GM12878 (cell line): ENCODE measurements at regions of chr9 and their contacts with region 1.

Region 1: DNA sequence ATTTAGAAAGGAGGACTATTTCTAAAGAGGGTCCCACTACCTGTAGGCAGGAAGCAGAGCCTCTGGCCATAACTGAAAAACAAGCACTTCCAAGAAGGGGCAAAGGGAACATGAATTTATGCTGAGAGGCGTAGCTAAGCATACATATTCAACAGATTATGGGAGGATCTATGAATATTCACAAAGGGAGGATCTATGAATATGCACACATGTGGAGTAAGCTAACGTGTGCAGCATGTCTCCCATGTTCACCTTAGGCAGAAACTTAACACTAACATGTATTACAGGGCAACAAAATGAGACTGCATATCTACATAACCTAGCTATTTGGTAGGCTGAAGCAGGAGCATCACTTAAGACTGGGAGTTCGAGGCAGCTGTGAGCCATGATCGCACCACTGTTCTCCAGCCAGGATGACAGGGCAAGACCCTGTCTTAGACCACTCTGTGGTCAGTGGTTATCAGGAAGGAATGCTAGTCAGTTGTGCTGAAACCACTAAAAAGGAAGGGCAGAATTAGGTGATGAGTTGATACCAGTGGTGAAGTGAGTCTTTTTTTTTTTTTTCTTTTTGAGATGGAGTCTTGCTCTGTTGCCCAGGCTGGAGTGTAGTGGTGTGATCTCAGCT is 20.8 kb downstream of the FXN start:
- DNase-seq: no peak
- ATAC-seq: no peak
- H3K4me3 ChIP-seq: no peak overlapping the region
- H3K27ac ChIP-seq: no peak overlapping the region
- H3K4me1 ChIP-seq: no peaks in the 10 kb centered on the region
- H3K27me3 ChIP-seq: no peaks in the 10 kb centered on the region
- CTCF ChIP-seq: no peak
- EP300 ChIP-seq: no peak
- POLR2A ChIP-seq: no peak
- RAD21 ChIP-seq: no peak

Region 2: GRCh38 chr9:68996462-68996861 is 59.8 kb before region 1 on chr9:
- CTCF ChIA-PET with region 1: no interaction called
- POLR2A ChIA-PET with region 1: no interaction called
- RAD21 ChIA-PET with region 1: no interaction called
- SMC1A ChIA-PET with region 1: no interaction called
- in situ Hi-C with region 1: no loop called
- intact Hi-C with region 1: no loop called
- DNase-seq: no peak
- ATAC-seq: no peak
- H3K4me3 ChIP-seq: no peak overlapping the region
- H3K27ac ChIP-seq: no peak overlapping the region
- H3K4me1 ChIP-seq: peaks cover 11% of the 10 kb centered on the region
- H3K27me3 ChIP-seq: no peaks in the 10 kb centered on the region
- CTCF ChIP-seq: no peak
- EP300 ChIP-seq: no peak
- POLR2A ChIP-seq: no peak
- RAD21 ChIP-seq: no peak

Region 3: GRCh38 chr9:69019808-69020207 is 36.5 kb before region 1 on chr9:
- CTCF ChIA-PET with region 1: no interaction called
- POLR2A ChIA-PET with region 1: no interaction called
- RAD21 ChIA-PET with region 1: no interaction called
- SMC1A ChIA-PET with region 1: no interaction called
- in situ Hi-C with region 1: no loop called
- intact Hi-C with region 1: no loop called
- DNase-seq: no peak
- ATAC-seq: no peak
- H3K4me3 ChIP-seq: no peak overlapping the region
- H3K27ac ChIP-seq: no peak overlapping the region
- H3K4me1 ChIP-seq: no peaks in the 10 kb centered on the region
- H3K27me3 ChIP-seq: no peaks in the 10 kb centered on the region
- CTCF ChIP-seq: no peak
- EP300 ChIP-seq: no peak
- POLR2A ChIP-seq: no peak
- RAD21 ChIP-seq: no peak

Region 4: GRCh38 chr9:69044240-69045219 is 11.8 kb before region 1 on chr9:
- CTCF ChIA-PET with region 1: interaction called, 14 read pairs
- POLR2A ChIA-PET with region 1: interaction called, 3 read pairs
- RAD21 ChIA-PET with region 1: interaction called, 3 read pairs
- SMC1A ChIA-PET with region 1: no interaction called
- in situ Hi-C with region 1: no loop called
- intact Hi-C with region 1: no loop called
- DNase-seq: no peak
- ATAC-seq: peak; percentile 39; the same call in 2 of the 3 replicates
- H3K4me3 ChIP-seq: no peak overlapping the region
- H3K27ac ChIP-seq: no peak overlapping the region
- H3K4me1 ChIP-seq: peaks cover 3% of the 10 kb centered on the region; the same call in 1 of the 2 replicates
- H3K27me3 ChIP-seq: no peaks in the 10 kb centered on the region
- CTCF ChIP-seq: no peak
- EP300 ChIP-seq: no peak
- POLR2A ChIP-seq: no peak
- RAD21 ChIP-seq: no peak

Region 5: DNA sequence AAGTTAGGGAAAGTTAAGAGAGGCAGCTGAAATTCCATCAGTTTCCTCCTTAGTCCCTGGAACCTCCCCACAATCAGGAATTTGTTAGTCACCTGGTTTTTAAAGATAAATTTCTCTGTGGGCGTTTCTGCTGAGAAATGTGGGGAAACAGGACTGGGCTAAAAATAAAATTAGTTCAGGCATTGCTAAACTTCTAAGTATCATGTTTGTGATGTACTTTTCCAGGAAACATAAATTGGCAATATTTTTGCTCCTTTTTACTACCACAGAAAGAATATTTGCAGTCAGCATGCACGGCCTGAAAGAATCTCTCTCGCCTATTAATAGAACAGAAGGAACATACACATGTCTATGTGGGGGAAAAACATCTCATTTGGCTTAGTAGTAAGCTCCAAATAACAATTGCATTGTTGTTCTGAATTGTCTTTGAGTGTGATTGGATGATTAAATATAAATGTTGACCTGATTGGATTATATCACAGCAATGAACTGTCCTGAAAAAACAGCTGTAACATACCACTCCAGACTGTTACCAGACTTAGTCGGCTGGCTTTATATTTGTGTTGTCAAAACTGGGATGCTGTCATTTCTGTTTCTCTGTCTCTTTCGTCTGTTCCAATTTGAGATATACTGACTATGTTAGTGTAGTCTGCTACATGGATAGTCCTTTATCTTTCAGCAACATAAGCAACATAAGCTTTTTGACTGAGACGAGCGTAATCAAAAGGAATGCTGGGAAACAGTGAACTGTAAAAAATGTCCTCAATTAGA is 130.7 kb after region 1 on chr9:
- CTCF ChIA-PET with region 1: interaction called, 289 read pairs
- POLR2A ChIA-PET with region 1: no interaction called
- RAD21 ChIA-PET with region 1: interaction called, 159 read pairs
- SMC1A ChIA-PET with region 1: interaction called, 130 read pairs
- in situ Hi-C with region 1: no loop called
- intact Hi-C with region 1: no loop called
- DNase-seq: no peak
- ATAC-seq: no peak
- H3K4me3 ChIP-seq: no peak overlapping the region
- H3K27ac ChIP-seq: no peak overlapping the region
- H3K4me1 ChIP-seq: peaks cover 20% of the 10 kb centered on the region
- H3K27me3 ChIP-seq: no peaks in the 10 kb centered on the region
- CTCF ChIP-seq: no peak
- EP300 ChIP-seq: no peak
- POLR2A ChIP-seq: no peak
- RAD21 ChIP-seq: no peak

Region 6: GRCh38 chr9:69199769-69200470 is 143.6 kb after region 1 on chr9:
- CTCF ChIA-PET with region 1: interaction called, 289 read pairs
- POLR2A ChIA-PET with region 1: interaction called, 4 read pairs
- RAD21 ChIA-PET with region 1: interaction called, 159 read pairs
- SMC1A ChIA-PET with region 1: interaction called, 130 read pairs
- in situ Hi-C with region 1: loop called (anchors 5 kb)
- intact Hi-C with region 1: no loop called
- DNase-seq: no peak
- ATAC-seq: no peak
- H3K4me3 ChIP-seq: no peak overlapping the region
- H3K27ac ChIP-seq: no peak overlapping the region
- H3K4me1 ChIP-seq: no peaks in the 10 kb centered on the region
- H3K27me3 ChIP-seq: no peaks in the 10 kb centered on the region
- CTCF ChIP-seq: no peak
- EP300 ChIP-seq: no peak
- POLR2A ChIP-seq: no peak
- RAD21 ChIP-seq: no peak

Region 7: DNA sequence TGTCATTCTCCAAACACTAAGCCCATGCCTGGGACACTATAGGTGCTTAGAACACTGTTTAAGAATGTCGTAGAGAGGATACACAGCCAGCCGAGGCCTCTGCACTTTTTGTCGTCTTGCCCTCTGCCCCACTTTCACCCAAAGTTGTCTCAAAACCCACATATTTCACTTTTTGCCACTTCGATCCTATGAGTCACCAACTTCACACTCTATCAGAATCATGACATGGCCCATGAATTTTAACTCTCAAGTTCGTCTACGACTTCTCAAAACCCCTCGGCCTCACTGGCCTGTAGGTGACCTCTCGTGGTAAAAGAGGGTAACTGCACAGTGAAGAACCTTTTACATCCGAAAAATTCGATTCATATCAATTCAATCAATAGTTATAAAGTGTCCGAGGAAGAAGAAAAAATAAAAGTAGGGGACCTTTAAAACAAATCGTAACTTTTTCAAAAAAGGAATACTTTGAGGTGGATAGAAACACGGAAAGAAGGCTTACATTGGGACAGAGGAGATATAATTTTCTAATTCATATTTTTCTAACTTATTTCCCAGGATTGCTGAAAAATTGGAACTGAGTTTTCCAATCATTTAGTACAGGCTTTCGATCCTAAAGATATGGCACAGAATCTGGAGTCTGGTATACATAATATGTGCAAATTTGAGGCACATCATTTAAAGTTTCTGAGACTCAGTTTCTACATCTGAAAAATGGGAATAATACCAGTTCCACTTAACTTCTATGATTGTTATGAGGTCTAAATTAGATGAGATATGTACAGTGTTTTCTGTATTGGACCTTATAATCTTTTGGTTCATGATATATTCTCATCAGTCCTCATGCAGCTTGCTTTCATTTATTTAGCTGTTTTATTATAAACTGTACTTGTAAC is 493.3 kb after region 1 on chr9:
- CTCF ChIA-PET with region 1: interaction called, 9 read pairs
- POLR2A ChIA-PET with region 1: no interaction called
- RAD21 ChIA-PET with region 1: no interaction called
- SMC1A ChIA-PET with region 1: interaction called, 3 read pairs
- in situ Hi-C with region 1: loop called (anchors 10 kb)
- intact Hi-C with region 1: loop called (anchors 5 kb)
- DNase-seq: no peak
- ATAC-seq: peak; percentile 67
- H3K4me3 ChIP-seq: no peak overlapping the region
- H3K27ac ChIP-seq: no peak overlapping the region
- H3K4me1 ChIP-seq: no peaks in the 10 kb centered on the region
- H3K27me3 ChIP-seq: peaks cover 2 to 3% of the 10 kb centered on the region in 2 experiments; a peak in 2 of 4 replicates
- CTCF ChIP-seq: peak; percentile 75 to 80 (median 78)
- EP300 ChIP-seq: no peak
- POLR2A ChIP-seq: no peak
- RAD21 ChIP-seq: peak; percentile 82

Region 8: DNA sequence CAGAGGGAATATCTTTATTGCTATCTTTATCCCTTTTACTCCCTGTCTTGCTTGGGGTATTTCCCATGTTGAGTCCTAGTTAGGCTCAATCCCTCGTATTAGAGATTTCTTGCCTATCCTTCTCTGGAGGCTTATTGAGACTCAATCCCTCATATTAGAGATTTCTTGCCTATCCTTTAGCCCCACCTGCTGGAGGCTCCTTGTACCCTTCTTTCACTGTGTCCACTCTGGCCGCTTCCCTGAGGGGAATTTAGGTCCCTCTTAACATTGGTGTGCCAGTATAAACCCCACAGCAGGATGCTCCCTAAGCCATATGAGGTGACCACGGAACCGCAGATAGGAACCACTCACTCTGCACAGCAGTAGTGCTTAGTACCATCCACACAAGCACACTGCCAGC is 876.6 kb after region 1 on chr9:
- CTCF ChIA-PET with region 1: no interaction called
- POLR2A ChIA-PET with region 1: no interaction called
- RAD21 ChIA-PET with region 1: no interaction called
- SMC1A ChIA-PET with region 1: no interaction called
- in situ Hi-C with region 1: loop called (anchors 25 kb)
- intact Hi-C with region 1: loop called (anchors 10 kb)
- DNase-seq: no peak
- ATAC-seq: peak; percentile 64
- H3K4me3 ChIP-seq: no peak overlapping the region
- H3K27ac ChIP-seq: no peak overlapping the region
- H3K4me1 ChIP-seq: no peaks in the 10 kb centered on the region
- H3K27me3 ChIP-seq: no peaks in the 10 kb centered on the region
- CTCF ChIP-seq: peak; percentile 16 to 35 (median 28); a peak in 4 of 6 replicates
- EP300 ChIP-seq: no peak
- POLR2A ChIP-seq: no peak
- RAD21 ChIP-seq: peak; percentile 24; the same call in 1 of the 2 replicates